CD4-positive, alpha-beta T cell (primary cell): ENCODE measurements at regions of chr11 and their contacts with region 1.

Region 1: GRCh38 chr11:112057170-112057569 is 16.6 kb downstream of the PIH1D2 start:
- DNase-seq: no peak
- ATAC-seq: no peak
- H3K4me3 ChIP-seq: no peak overlapping the region
- H3K4me3 Mint-ChIP-seq: no peak overlapping the region
- H3K27ac ChIP-seq: no peak overlapping the region
- H3K27ac Mint-ChIP-seq: no peak overlapping the region
- H3K4me1 ChIP-seq: no peaks in the 10 kb centered on the region
- H3K4me1 Mint-ChIP-seq: no peaks in the 10 kb centered on the region
- H3K27me3 ChIP-seq: no peaks in the 10 kb centered on the region
- H3K27me3 Mint-ChIP-seq: no peaks in the 10 kb centered on the region
- CTCF ChIP-seq: no peak

Region 2: DNA sequence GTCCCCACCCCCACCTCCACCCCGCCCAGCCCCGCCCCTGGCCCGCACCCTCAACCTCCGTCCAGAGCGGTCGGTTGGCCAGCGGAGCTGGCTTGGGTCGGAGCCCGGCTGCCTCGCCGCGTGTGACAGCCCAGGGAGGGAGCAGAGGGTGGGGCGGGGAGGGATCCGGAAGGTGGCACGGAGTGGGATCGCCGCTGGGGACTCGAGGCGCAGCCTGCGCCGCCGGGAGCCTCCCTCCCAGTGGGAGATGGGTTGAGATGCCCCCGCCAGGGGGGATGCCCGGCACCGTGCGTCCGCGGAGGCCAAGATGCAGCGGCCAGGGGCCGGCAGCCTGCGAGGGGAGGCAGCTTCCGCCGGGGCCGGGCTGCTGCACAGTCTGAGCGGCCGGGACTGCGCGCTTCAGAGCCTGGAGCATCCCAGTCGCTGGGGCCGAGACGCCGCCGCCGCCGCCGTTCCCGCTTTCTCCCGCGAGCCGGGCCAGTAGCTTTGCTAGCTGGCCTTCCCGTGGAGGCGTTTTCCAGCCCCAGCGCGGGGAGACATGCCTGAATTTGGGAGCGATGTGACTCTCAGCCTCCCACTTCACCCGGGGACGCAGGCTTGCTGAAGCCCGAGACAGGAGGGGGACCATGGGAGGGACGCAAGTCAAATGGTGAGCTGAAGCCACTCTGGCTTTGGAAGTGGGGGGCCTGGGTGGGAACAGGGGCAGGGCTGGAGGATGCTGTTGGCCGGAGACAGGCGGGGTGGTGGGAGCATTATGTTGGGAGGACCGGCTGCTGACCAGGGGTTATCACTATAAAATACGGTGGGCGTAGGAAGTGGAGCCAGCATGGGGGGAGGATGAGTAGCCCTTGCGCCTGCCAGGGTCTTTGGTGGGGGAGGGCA is 79.8 kb before region 1 on chr11:
- CTCF ChIA-PET with region 1: no interaction called
- POLR2A ChIA-PET with region 1: no interaction called
- intact Hi-C with region 1: no loop called
- DNase-seq: peak in 5 of 14 experiments; percentile 3 to 35 (median 9)
- ATAC-seq: peak; percentile 59
- H3K4me3 ChIP-seq: peak overlapping the region; percentile 47
- H3K4me3 Mint-ChIP-seq: peak overlapping the region; percentile 73
- H3K27ac ChIP-seq: no peak overlapping the region
- H3K27ac Mint-ChIP-seq: no peak overlapping the region
- H3K4me1 ChIP-seq: peaks cover 10% of the 10 kb centered on the region
- H3K4me1 Mint-ChIP-seq: peaks cover 10% of the 10 kb centered on the region
- H3K27me3 ChIP-seq: peaks cover 14 to 16% of the 10 kb centered on the region in 2 experiments
- H3K27me3 Mint-ChIP-seq: peaks cover 34% of the 10 kb centered on the region
- CTCF ChIP-seq: no peak

Region 3: GRCh38 chr11:112033156-112033555 is 24.0 kb before region 1 on chr11:
- CTCF ChIA-PET with region 1: no interaction called
- POLR2A ChIA-PET with region 1: no interaction called
- intact Hi-C with region 1: loop called in 1 of 2 experiments (anchors 1 kb)
- DNase-seq: no peak
- ATAC-seq: no peak
- H3K4me3 ChIP-seq: no peak overlapping the region
- H3K4me3 Mint-ChIP-seq: no peak overlapping the region
- H3K27ac ChIP-seq: no peak overlapping the region
- H3K27ac Mint-ChIP-seq: no peak overlapping the region
- H3K4me1 ChIP-seq: no peaks in the 10 kb centered on the region
- H3K4me1 Mint-ChIP-seq: peaks cover 14% of the 10 kb centered on the region
- H3K27me3 ChIP-seq: no peaks in the 10 kb centered on the region
- H3K27me3 Mint-ChIP-seq: no peaks in the 10 kb centered on the region
- CTCF ChIP-seq: no peak